ENCODE measurements at regions of chr11 and their contacts with region 1.

Region 1: GRCh38 chr11:57249384-57250319 is 12.6 kb upstream of the APLNR start:
- DNase-seq: peak; percentile 66
- ATAC-seq: peak; percentile 19
- H3K4me3 Mint-ChIP-seq: no peak overlapping the region
- H3K27ac Mint-ChIP-seq: no peak overlapping the region
- H3K4me1 Mint-ChIP-seq: peaks cover 8% of the 10 kb centered on the region
- H3K27me3 Mint-ChIP-seq: peaks cover 12% of the 10 kb centered on the region

Region 2: GRCh38 chr11:56841210-56841810 is 408.3 kb before region 1 on chr11:
- CTCF ChIA-PET with region 1: interaction called, 122 read pairs
- POLR2A ChIA-PET with region 1: interaction called, 3 read pairs
- DNase-seq: peak; percentile 49
- ATAC-seq: no peak
- H3K4me3 Mint-ChIP-seq: no peak overlapping the region
- H3K27ac Mint-ChIP-seq: no peak overlapping the region
- H3K4me1 Mint-ChIP-seq: no peaks in the 10 kb centered on the region
- H3K27me3 Mint-ChIP-seq: no peaks in the 10 kb centered on the region

Region 3: GRCh38 chr11:57116654-57117053 is 133.0 kb before region 1 on chr11:
- CTCF ChIA-PET with region 1: interaction called, 23 read pairs
- POLR2A ChIA-PET with region 1: no interaction called
- DNase-seq: peak; percentile 33
- ATAC-seq: no peak
- H3K4me3 Mint-ChIP-seq: no peak overlapping the region
- H3K27ac Mint-ChIP-seq: no peak overlapping the region
- H3K4me1 Mint-ChIP-seq: no peaks in the 10 kb centered on the region
- H3K27me3 Mint-ChIP-seq: no peaks in the 10 kb centered on the region

Region 4: GRCh38 chr11:57124917-57125316 is 124.7 kb before region 1 on chr11:
- CTCF ChIA-PET with region 1: interaction called, 11 read pairs
- POLR2A ChIA-PET with region 1: no interaction called
- DNase-seq: no peak
- ATAC-seq: no peak
- H3K4me3 Mint-ChIP-seq: no peak overlapping the region
- H3K27ac Mint-ChIP-seq: no peak overlapping the region
- H3K4me1 Mint-ChIP-seq: no peaks in the 10 kb centered on the region
- H3K27me3 Mint-ChIP-seq: peaks cover 20% of the 10 kb centered on the region

Region 5: GRCh38 chr11:57133366-57134038 is 116.2 kb before region 1 on chr11:
- CTCF ChIA-PET with region 1: interaction called, 10 read pairs
- POLR2A ChIA-PET with region 1: no interaction called
- DNase-seq: no peak
- ATAC-seq: no peak
- H3K4me3 Mint-ChIP-seq: no peak overlapping the region
- H3K27ac Mint-ChIP-seq: no peak overlapping the region
- H3K4me1 Mint-ChIP-seq: no peaks in the 10 kb centered on the region
- H3K27me3 Mint-ChIP-seq: peaks cover 10% of the 10 kb centered on the region

Measured in activated CD8-positive, alpha-beta T cell treated with anti-CD3 and anti-CD28 coated beads, Interleukin-2, amount 10 ng/mL, durations not matched to agents 7 days and 5 days (primary cell).